ENCODE measurements at regions of chr1 and their contacts with region 1.

Region 1: DNA sequence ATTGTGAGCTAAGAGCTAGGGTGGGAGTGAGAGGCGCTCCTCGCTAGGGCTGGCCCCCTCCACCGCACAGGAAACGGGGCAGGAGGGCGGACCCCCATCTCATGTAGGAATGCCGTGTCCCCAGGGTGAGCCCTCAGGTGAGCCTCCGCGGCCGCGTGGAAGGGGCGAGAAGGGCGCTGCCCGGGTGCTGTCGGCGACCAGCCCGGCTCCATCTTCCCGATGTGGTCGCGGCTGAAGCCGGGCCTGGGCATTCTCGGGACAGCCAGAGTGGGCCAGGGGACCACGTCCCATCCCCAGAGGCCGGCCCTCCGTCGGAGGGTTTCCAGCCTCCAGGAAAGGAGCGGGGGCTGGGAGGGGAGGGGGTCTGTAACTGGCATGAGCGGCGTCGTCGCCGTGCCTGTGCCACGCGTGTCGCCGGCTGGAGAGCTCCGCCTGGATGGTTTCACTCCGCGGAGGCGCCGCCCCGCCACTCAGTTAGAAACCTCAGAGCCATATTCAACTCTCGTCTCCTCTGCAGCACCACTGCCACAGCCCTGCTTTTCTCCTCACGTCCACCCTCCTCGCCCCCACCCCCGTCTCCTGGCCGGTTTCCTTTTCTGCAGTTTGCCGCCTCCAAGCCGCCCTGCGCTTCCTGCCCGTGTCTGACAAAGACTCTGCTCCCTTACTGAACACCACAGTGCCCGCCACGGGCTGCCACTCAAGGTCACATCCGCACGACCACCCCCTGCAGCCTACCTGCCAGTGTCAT is at the start of gene TMEM269:
- DNase-seq: peak in 1 of 2 donors; percentile 68
- H3K4me3 ChIP-seq: peak within 1 kb of the TSS; percentile 42 to 48
- H3K27ac ChIP-seq: no peak within 1 kb of the TSS
- H3K4me1 ChIP-seq: peaks cover 0 to 14% (median 10%) of the 10 kb centered on the region in 4 donors
- H3K27me3 ChIP-seq: no peaks in the 10 kb centered on the region
- CTCF ChIP-seq: no peak

Region 2: DNA sequence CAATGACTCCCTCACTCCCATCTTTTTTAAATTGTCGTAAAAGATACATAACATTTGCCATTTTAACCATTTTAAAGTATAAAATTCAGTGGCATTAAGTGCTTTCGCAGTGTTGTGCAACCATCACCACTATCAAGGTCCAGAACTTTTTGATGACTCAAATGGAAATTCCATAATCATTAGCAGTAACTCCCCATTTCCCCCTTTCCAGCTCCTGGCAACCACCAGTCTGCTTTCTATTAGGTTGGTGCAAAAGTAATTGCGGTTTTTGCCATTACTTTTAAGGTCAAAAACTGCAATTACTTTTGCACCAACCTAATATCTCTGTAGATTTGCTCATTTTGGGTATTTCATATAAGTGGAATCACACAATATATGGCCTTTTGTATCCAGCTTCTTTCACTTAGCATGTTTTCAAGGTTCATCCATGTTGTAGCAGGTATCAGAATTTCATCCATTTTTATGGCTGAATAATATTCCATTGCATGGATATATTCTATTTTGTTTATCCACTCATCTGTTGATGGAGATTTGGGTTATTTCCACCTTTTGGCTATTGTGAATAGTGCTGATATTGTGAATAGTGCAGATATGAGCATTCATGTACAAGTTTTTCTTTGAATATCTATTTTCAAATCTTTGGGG is 1026.1 kb before region 1 on chr1:
- intact Hi-C with region 1: loop called (anchors 5 kb)
- DNase-seq: no peak
- H3K4me3 ChIP-seq: no peak overlapping the region
- H3K27ac ChIP-seq: no peak overlapping the region
- H3K4me1 ChIP-seq: no peaks in the 10 kb centered on the region
- H3K27me3 ChIP-seq: no peaks in the 10 kb centered on the region
- CTCF ChIP-seq: no peak

Region 3: DNA sequence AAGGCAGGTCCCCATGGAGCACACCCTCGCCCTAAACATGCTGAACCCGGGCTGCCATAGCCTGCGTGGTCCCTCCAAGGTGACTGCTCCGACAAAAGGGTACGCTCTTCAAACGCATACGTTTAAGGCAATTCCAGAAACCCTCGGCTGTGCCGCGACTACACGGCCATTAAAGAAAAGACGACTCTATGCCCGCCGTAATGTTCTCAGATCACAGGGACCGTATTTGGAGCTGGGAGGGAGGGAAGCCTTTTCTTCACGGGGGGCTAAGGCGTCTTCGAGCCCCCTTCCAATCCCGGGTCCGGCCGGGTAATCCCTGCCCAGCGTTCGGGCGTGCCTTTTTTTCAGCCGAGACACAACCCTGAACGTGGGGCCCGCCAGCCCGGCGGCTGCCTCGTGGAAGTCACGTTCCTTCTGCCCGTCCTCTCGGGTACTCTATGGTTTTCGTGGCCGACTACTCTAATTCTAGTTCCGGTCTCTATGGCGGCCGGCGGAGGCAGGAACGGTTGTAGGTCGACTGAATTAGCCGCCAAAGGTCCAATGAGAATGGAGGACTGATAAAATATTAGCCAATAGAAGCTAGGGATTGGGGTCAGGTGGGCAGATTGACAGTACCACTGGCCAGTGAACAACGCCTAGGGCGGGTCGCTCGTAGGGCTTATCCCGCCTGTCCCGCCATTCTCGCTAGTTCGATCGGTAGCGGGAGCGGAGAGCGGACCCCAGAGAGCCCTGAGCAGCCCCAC is 103.2 kb before region 1 on chr1 and contains the start of gene YBX1:
- intact Hi-C with region 1: no loop called
- DNase-seq: peak; percentile 98
- H3K4me3 ChIP-seq: peak within 1 kb of the TSS; percentile 88 to 96
- H3K27ac ChIP-seq: peak within 1 kb of the TSS; percentile 91 to 92
- H3K4me1 ChIP-seq: peaks cover 0 to 54% (median 40%) of the 10 kb centered on the region in 4 donors
- H3K27me3 ChIP-seq: no peaks in the 10 kb centered on the region
- CTCF ChIP-seq: no peak

Region 4: GRCh38 chr1:42730988-42731387 is 54.1 kb before region 1 on chr1:
- intact Hi-C with region 1: no loop called
- DNase-seq: no peak
- H3K4me3 ChIP-seq: no peak overlapping the region
- H3K27ac ChIP-seq: no peak overlapping the region
- H3K4me1 ChIP-seq: no peaks in the 10 kb centered on the region
- H3K27me3 ChIP-seq: no peaks in the 10 kb centered on the region
- CTCF ChIP-seq: no peak

Region 5: DNA sequence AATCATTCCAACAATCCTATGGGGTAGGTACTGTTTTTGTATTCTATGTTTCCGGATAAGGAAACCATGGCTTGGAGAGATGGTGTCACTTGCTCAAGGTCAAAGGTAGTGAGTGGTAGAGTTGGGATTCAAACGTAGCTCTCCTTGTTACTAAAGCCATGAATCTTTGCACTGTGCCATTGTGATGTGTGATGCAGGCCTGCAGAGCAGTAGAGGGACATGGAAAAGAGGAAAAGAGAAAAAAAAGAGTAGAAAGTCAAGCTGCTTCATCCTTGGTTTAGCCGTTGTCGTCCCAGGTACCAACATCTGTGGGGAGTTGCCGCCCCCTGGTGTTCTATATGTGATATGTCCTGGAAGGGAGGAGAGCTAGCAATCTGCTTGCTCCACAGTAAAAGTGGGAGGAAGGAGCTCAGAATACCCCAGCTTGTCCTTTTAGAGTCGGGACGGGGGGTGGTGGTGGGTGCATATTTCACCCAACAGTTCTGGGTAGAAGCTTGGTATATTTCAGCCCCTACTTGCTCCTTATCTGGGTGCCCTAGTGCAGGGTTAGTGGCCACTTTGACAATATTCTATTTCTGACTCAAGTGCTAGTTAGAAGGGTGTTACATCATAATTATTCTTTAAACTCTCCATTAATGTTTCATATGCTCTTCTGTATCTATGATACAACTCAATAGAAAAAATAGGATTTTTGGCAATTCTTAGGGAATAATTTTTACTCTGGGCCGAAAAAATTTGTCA is 288.5 kb after region 1 on chr1:
- intact Hi-C with region 1: loop called (anchors 10 kb)
- DNase-seq: peak; percentile 65 to 78
- H3K4me3 ChIP-seq: no peak overlapping the region
- H3K27ac ChIP-seq: no peak overlapping the region
- H3K4me1 ChIP-seq: peaks cover 0 to 3% (median 0%) of the 10 kb centered on the region in 4 donors
- H3K27me3 ChIP-seq: peaks cover 0 to 4% of the 10 kb centered on the region in 2 donors
- CTCF ChIP-seq: peak; percentile 72 to 95

Measured in tibial artery (tissue), 4 donors.